Esophagus muscularis mucosa (tissue), 4 donors: ENCODE measurements at regions of chr16 and their contacts with region 1.

Region 1: DNA sequence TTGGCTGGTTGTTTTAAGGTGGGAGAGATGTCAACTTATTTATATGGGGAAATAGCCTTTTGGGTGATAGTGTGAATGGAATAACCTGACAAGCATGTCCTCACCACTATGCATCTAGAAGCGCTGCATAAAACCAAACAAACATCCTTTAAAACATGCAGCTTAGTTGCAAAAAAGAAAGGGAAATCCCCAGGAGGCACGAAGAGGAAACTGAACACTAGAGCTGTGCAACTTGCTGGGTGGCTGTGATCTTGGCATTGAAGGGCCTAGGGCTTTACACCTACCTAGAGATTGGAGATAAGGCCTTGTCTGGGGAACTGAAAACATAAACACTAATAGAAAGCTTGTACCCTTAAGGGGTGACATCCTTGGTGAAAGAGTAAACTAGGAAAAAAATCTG is 7.3 kb downstream of the C16orf54 start:
- DNase-seq: no peak
- H3K4me3 ChIP-seq: no peak overlapping the region
- H3K27ac ChIP-seq: no peak overlapping the region
- H3K4me1 ChIP-seq: no peaks in the 10 kb centered on the region
- H3K27me3 ChIP-seq: peaks cover 0 to 17% (median 0%) of the 10 kb centered on the region in 4 donors
- CTCF ChIP-seq: no peak
- EP300 ChIP-seq: no peak
- POLR2A ChIP-seq: no peak

Region 2: GRCh38 chr16:29784901-29785500 is 46.5 kb after region 1 on chr16:
- intact Hi-C with region 1: loop called (anchors 10 kb)
- DNase-seq: no peak
- H3K4me3 ChIP-seq: peak overlapping the region; percentile 27 to 52 (median 32)
- H3K27ac ChIP-seq: no peak overlapping the region
- H3K4me1 ChIP-seq: peaks cover 12 to 21% (median 17%) of the 10 kb centered on the region in 4 donors
- H3K27me3 ChIP-seq: peaks cover 0 to 6% (median 0%) of the 10 kb centered on the region in 4 donors
- CTCF ChIP-seq: peak; percentile 66 to 88 (median 66)
- EP300 ChIP-seq: no peak
- POLR2A ChIP-seq: no peak

Region 3: DNA sequence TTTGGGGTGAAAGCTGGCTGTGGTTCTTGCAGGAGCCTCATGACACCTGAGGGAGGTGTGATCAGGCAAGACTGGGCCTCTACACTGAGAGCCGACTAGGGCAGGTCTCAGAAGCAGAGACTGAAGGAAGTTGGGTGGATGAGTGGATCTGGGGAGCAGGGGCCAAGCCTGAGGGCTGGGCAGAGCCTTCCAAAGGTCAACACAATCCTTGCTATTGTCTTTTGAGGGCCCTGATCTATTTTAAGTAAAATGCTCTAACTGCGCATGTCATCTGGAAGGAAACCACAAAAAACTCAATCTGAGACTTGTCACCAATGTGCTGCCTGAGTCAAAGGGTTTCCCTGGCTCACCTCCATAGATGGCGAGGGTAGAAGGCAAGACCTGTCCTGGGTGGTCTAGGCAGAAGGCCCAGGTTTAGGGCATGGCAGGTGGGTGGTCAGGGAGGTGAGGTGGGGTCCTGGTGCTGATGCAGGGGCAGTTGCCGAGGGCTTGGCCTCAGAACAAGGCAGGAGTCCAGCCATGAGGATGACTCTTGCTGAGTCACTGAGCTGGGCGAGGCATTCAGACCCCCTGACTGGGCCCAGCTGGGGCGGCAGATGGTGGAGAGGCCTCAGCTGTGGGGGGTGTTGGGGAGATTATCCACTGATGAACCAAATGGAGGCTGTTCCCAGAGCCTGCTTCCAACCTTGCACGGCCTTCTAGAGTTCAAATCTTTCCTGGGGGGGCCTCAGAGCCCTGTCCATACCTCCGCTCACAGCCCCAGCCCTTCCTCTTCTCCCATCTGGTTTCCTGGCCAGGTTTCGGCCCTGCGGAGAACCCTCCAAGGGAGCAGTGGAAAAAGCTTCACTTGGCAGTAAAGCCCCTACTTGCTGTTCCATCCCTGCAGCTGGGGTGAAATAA is 86.9 kb after region 1 on chr16:
- intact Hi-C with region 1: no loop called
- DNase-seq: no peak
- H3K4me3 ChIP-seq: peak overlapping the region in 3 of 4 donors; percentile 12 to 36 (median 23)
- H3K27ac ChIP-seq: peak overlapping the region; percentile 55 to 76 (median 72)
- H3K4me1 ChIP-seq: peaks cover 56 to 97% (median 89%) of the 10 kb centered on the region in 4 donors
- H3K27me3 ChIP-seq: no peaks in the 10 kb centered on the region
- CTCF ChIP-seq: no peak
- EP300 ChIP-seq: no peak
- POLR2A ChIP-seq: no peak

Region 4: GRCh38 chr16:29973384-29974246 is 235.1 kb after region 1 on chr16 and contains the start of gene TAOK2:
- intact Hi-C with region 1: no loop called
- DNase-seq: peak; percentile 99
- H3K4me3 ChIP-seq: peak within 1 kb of the TSS; percentile 64 to 98 (median 81)
- H3K27ac ChIP-seq: peak within 1 kb of the TSS; percentile 84 to 93 (median 90)
- H3K4me1 ChIP-seq: peaks cover 40 to 50% (median 46%) of the 10 kb centered on the region in 4 donors
- H3K27me3 ChIP-seq: no peaks in the 10 kb centered on the region
- CTCF ChIP-seq: peak in 1 of 3 experiments; percentile 27
- EP300 ChIP-seq: no peak
- POLR2A ChIP-seq: peak; percentile 76
- total RNA-seq, gene TAOK2: 40.9 to 63.6 (median 51.4) TPM